Spleen (tissue), 13 donors: ENCODE measurements at regions of chr1 and their contacts with region 1.

Region 1: GRCh38 chr1:48109390-48110013 is 112.3 kb upstream of the TRABD2B start:
- DNase-seq: no peak
- H3K4me3 ChIP-seq: no peak overlapping the region
- H3K27ac ChIP-seq: no peak overlapping the region
- H3K4me1 ChIP-seq: no peaks in the 10 kb centered on the region
- H3K27me3 ChIP-seq: peaks cover 0 to 8% (median 0%) of the 10 kb centered on the region in 7 donors
- CTCF ChIP-seq: peak; percentile 7 to 82 (median 67)
- POLR2A ChIP-seq: no peak

Region 2: DNA sequence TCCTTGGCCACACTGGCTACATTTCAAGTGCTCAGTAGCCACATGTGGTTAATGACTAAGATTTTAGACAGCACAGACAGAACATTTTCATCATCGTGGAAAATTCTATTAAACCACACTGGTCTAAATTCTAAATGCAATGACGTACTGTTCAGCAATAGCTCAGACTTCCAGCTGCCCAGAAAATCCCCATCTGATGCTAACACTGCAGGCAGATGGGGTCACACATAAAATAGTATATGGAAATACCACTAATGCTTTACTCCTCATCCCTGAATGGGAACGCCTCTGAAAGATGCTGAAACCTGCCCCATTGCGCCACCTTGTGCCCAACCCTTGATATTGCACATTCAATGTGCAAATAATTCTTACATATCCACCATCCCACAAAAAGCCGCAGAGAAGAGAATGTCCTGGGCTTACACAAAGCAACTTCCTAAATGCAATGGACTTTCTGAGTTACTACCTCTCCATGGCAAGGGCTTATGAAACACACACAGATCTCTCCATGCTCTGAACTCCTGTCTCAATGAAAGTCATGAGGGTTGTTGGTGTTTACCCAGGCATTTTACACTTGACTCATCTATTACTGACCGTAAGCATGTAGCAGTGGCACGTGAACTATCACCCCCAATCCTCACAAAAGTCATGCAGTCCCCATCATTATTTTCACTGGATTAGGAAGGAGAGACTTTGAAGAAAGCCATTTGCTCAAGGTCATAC is 92.7 kb after region 1 on chr1:
- intact Hi-C with region 1: loop called (anchors 5 kb)
- DNase-seq: peak; percentile 89
- H3K4me3 ChIP-seq: no peak overlapping the region
- H3K27ac ChIP-seq: no peak overlapping the region
- H3K4me1 ChIP-seq: no peaks in the 10 kb centered on the region
- H3K27me3 ChIP-seq: no peaks in the 10 kb centered on the region
- CTCF ChIP-seq: peak; percentile 54 to 84 (median 79)
- POLR2A ChIP-seq: no peak

Region 3: GRCh38 chr1:48236716-48237470 is 127.4 kb after region 1 on chr1:
- intact Hi-C with region 1: loop called (anchors 10 kb)
- DNase-seq: no peak
- H3K4me3 ChIP-seq: no peak overlapping the region
- H3K27ac ChIP-seq: no peak overlapping the region
- H3K4me1 ChIP-seq: peaks cover 0 to 32% (median 13%) of the 10 kb centered on the region in 6 donors
- H3K27me3 ChIP-seq: no peaks in the 10 kb centered on the region
- CTCF ChIP-seq: peak; percentile 55 to 91 (median 72)
- POLR2A ChIP-seq: no peak

Region 4: GRCh38 chr1:48498096-48498791 is 388.7 kb after region 1 on chr1:
- intact Hi-C with region 1: loop called (anchors 10 kb)
- DNase-seq: peak; percentile 91
- H3K4me3 ChIP-seq: no peak overlapping the region
- H3K27ac ChIP-seq: no peak overlapping the region
- H3K4me1 ChIP-seq: peaks cover 6 to 27% (median 15%) of the 10 kb centered on the region in 6 donors
- H3K27me3 ChIP-seq: no peaks in the 10 kb centered on the region
- CTCF ChIP-seq: peak; percentile 71 to 94 (median 90)
- POLR2A ChIP-seq: no peak